ENCODE measurements at regions of chr19 and their contacts with region 1.

Region 1: GRCh38 chr19:6674868-6675305 is 4.9 kb upstream of the TNFSF14 start:
- DNase-seq: peak; percentile 97
- H3K4me3 Mint-ChIP-seq: peak overlapping the region; percentile 34
- H3K27ac Mint-ChIP-seq: peak overlapping the region; percentile 77
- H3K4me1 Mint-ChIP-seq: peaks cover 78% of the 10 kb centered on the region
- H3K27me3 Mint-ChIP-seq: no peaks in the 10 kb centered on the region

Region 2: DNA sequence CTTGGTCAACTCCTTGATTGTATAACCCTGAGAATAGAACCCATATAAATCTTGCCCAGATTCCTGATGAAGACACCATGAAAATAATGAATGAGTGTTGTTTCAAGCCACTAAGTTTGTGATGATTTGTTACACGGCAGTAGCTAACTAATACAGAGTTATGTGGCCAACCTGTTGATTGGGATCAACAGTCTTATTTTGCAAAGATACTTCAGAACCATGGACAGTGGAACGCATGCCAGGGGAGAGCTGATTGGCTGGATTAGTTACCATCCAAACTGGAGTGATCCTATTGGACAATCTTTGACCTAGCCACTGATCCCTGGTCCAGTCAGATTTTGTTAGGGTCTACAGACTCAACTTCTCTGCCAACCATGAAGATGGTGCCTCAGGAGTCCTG is 110.5 kb before region 1 on chr19:
- CTCF ChIA-PET with region 1: no interaction called
- intact Hi-C with region 1: no loop called
- DNase-seq: peak; percentile 21
- H3K4me3 Mint-ChIP-seq: no peak overlapping the region
- H3K27ac Mint-ChIP-seq: no peak overlapping the region
- H3K4me1 Mint-ChIP-seq: no peaks in the 10 kb centered on the region
- H3K27me3 Mint-ChIP-seq: peaks cover 5% of the 10 kb centered on the region

Region 3: GRCh38 chr19:6654347-6655310 is 20.3 kb before region 1 on chr19:
- CTCF ChIA-PET with region 1: interaction called, 17 read pairs
- intact Hi-C with region 1: loop called (anchors 1 kb)
- DNase-seq: peak; percentile 78
- H3K4me3 Mint-ChIP-seq: peak overlapping the region; percentile 64
- H3K27ac Mint-ChIP-seq: peak overlapping the region; percentile 96
- H3K4me1 Mint-ChIP-seq: peaks cover 55% of the 10 kb centered on the region
- H3K27me3 Mint-ChIP-seq: no peaks in the 10 kb centered on the region

Region 4: DNA sequence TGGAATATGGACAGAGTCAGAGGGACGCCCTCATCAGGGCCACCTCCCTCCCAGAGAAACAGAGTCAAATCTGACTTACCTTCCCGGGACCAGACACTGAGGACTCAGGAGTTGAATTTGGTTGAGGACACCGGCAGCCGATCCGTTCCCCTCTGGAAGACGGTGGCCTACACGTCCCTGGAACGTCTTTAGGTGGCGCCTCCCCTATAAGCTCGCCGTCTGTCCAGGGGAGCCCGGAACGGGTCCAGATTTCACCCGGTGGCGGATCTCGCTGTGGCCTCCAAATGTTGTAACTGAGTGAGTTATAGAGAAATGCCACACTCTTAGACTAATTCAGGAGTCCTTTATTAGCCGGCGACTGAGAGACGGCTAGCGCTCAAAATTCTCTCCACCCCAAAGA is 14.0 kb before region 1 on chr19:
- CTCF ChIA-PET with region 1: interaction called, 8 read pairs
- intact Hi-C with region 1: loop called (anchors 1 kb)
- DNase-seq: no peak
- H3K4me3 Mint-ChIP-seq: peak overlapping the region; percentile 54
- H3K27ac Mint-ChIP-seq: no peak overlapping the region
- H3K4me1 Mint-ChIP-seq: peaks cover 19% of the 10 kb centered on the region
- H3K27me3 Mint-ChIP-seq: no peaks in the 10 kb centered on the region